Activated B cell treated with CpG ODN at 0.5 μM for 24 hours (primary cell): ENCODE measurements at regions of chr9 and their contacts with region 1.

Region 1: GRCh38 chr9:90142580-90142979 is 500.0 kb downstream of the DIRAS2 start:
- DNase-seq: no peak
- ATAC-seq: no peak
- H3K4me3 Mint-ChIP-seq: no peak overlapping the region
- H3K27ac Mint-ChIP-seq: no peak overlapping the region
- H3K4me1 Mint-ChIP-seq: peaks cover 4% of the 10 kb centered on the region
- H3K27me3 Mint-ChIP-seq: peaks cover 19% of the 10 kb centered on the region
- CTCF ChIP-seq: peak; percentile 45

Region 2: DNA sequence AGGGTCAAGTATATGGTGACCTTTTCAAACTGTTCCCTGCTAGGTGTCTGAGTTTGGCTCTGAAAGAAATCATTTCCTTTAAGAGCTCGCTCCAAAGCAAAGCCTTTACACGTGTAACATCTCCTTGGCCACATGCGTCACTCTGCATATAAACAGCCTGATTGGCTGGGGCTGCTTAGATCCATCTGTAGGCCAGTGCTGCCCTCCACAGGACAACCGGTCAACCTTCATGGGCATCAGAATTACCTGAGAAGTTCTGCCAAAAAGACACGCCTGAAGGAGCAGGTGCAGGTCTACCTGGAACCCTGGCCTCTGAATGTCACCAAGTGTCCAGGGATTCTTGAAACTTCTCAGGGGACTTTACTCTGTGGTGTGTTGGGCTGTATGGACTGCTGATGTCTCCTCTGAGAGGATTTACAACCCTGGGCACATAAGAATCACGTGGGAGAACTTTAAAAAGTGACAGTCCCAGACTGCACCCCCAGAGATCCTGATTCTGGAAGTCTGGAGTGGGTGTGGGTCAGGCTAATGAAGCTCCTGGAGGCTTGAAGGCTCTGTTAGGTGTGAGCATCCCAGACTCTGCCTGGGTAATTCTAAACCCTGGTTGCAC is 40.2 kb before region 1 on chr9:
- CTCF ChIA-PET with region 1: no interaction called
- POLR2A ChIA-PET with region 1: no interaction called
- intact Hi-C with region 1: loop called (anchors 2 kb)
- DNase-seq: peak; percentile 56
- ATAC-seq: peak; percentile 100
- H3K4me3 Mint-ChIP-seq: no peak overlapping the region
- H3K27ac Mint-ChIP-seq: no peak overlapping the region
- H3K4me1 Mint-ChIP-seq: peaks cover 6% of the 10 kb centered on the region
- H3K27me3 Mint-ChIP-seq: no peaks in the 10 kb centered on the region
- CTCF ChIP-seq: peak; percentile 73

Region 3: DNA sequence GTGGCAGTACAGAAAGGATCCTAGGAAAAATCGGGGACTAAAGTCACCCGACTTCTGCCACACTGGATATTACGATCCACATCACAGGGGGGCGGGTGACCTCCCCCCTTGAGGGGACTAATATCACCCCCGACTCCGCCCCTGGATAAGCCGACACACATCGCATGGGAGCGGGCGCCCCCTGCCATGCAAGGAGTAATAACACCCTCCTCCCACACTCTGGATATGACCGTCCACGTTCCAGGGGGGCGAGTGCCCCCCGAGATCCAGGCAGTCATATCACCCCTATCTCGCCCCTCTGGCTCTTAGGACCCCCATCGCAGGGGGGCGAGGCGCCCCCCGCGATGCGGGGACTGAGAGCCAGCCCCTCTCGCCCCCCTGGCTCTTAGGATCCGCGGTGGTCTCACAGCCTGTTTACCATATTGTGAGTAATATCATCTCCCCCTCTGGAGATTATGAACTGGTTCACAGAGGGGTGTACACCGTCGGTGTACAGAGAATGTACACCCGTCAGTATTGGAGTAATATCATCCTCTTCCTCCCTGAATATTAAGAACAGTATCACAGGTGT is 77.1 kb after region 1 on chr9:
- CTCF ChIA-PET with region 1: interaction called, 16 read pairs
- POLR2A ChIA-PET with region 1: no interaction called
- intact Hi-C with region 1: loop called (anchors 1 kb)
- DNase-seq: peak; percentile 55
- ATAC-seq: peak; percentile 86
- H3K4me3 Mint-ChIP-seq: peak overlapping the region; percentile 46
- H3K27ac Mint-ChIP-seq: no peak overlapping the region
- H3K4me1 Mint-ChIP-seq: peaks cover 10% of the 10 kb centered on the region
- H3K27me3 Mint-ChIP-seq: peaks cover 9% of the 10 kb centered on the region
- CTCF ChIP-seq: no peak

Region 4: DNA sequence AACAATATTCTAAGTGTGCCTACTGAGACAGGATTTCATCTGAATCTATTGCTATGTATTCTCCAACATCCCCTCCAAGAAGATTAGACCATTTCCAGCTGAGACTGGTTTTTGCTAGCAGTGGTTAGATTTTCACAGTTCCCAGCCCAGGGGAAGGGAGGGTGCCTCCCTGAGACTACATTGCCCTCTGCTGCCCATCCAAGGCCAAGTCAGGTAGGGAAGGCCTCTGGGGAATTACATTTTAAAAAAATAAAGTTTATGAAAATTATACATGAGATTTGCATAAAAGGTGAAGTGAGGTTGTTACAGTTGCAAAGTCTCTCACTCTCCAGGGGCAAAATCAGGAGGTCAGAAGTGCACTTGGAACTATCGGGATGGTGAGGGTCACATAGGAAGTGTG is 631.0 kb after region 1 on chr9:
- CTCF ChIA-PET with region 1: no interaction called
- POLR2A ChIA-PET with region 1: no interaction called
- intact Hi-C with region 1: loop called (anchors 5 kb)
- DNase-seq: no peak
- ATAC-seq: peak; percentile 16
- H3K4me3 Mint-ChIP-seq: peak overlapping the region; percentile 28
- H3K27ac Mint-ChIP-seq: peak overlapping the region; percentile 65
- H3K4me1 Mint-ChIP-seq: peaks cover 65% of the 10 kb centered on the region
- H3K27me3 Mint-ChIP-seq: no peaks in the 10 kb centered on the region
- CTCF ChIP-seq: no peak